Astrocyte of the cerebellum (primary cell): ENCODE measurements at regions of chr6 and their contacts with region 1.

Region 1: DNA sequence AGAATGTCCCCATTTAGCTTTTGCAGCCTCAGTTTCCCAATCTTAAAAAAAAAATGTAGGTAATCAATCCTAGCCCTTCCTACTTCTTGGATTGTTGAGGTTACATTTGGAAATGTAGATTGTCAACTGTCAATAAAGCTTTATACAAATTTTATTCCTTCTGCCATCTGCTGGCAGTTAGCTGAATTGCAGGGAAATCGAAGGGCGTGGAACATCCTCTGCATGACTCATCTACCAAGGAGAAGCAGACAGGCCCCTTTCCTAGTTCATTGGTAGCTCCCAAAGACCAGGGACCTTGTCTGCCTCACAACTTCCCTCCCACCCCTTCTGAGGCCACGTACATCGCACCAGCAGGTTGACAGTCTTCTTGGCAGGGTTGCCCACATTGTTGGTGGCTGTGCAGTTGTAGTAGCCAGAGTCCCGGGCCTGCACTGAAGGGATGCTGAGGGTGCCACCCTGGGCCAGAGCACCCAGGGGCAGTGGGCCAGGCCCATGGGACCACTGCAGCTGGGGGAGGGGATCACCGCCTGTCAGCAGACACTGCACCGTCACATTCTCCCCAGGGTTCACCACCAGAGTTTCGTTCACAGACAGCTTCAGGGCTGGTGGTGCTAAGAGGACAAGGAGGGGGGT is 43.6 kb downstream of the MDGA1 start:
- DNase-seq: no peak
- H3K4me3 ChIP-seq: no peak overlapping the region
- CTCF ChIP-seq: peak; percentile 57

Region 2: GRCh38 chr6:37499433-37500293 is 154.4 kb before region 1 on chr6 and contains the start of gene CCDC167:
- in situ Hi-C with region 1: loop called (anchors 25 kb)
- DNase-seq: peak; percentile 93
- H3K4me3 ChIP-seq: peak within 1 kb of the TSS; percentile 73
- CTCF ChIP-seq: no peak